ENCODE measurements at regions of chr18 and their contacts with region 1.

Region 1: DNA sequence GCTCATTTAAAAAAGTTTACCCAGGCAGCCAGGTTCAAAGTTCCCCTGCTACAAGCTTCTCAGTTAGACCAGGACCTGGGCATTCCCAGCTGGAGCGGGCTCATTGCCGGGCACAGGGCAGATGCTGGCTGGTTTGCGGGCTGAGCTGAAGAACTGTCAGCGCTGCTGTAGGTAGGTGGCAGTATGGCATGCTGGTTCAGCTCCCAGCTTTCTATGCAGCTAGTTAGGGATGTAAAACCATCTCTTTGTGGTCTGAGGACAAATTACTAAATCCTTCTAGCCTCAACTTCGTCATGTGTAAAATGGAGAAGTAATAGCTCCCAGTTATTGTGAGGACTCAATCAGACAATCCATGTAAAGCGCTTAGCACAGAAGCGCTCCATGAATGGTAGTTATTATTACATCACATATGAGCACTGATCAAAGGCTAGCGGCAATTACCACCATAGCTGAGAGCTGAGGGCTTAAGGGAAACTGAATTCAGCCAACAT is 2.4 kb upstream of the LDLRAD4 start:
- DNase-seq: peak; percentile 72
- H3K4me3 ChIP-seq: peak overlapping the region; percentile 74
- H3K27ac ChIP-seq: peak overlapping the region; percentile 92
- H3K4me1 ChIP-seq: peaks cover 47% of the 10 kb centered on the region
- H3K27me3 ChIP-seq: no peaks in the 10 kb centered on the region
- CTCF ChIP-seq: peak; percentile 84

Region 2: GRCh38 chr18:13095466-13095865 is 120.7 kb before region 1 on chr18:
- intact Hi-C with region 1: no loop called
- DNase-seq: no peak
- H3K4me3 ChIP-seq: no peak overlapping the region
- H3K27ac ChIP-seq: no peak overlapping the region
- H3K4me1 ChIP-seq: peaks cover 5% of the 10 kb centered on the region
- H3K27me3 ChIP-seq: no peaks in the 10 kb centered on the region
- CTCF ChIP-seq: no peak

Region 3: GRCh38 chr18:13319629-13320028 is 103.5 kb after region 1 on chr18:
- intact Hi-C with region 1: loop called (anchors 10 kb)
- DNase-seq: no peak
- H3K4me3 ChIP-seq: no peak overlapping the region
- H3K27ac ChIP-seq: peak overlapping the region; percentile 35
- H3K4me1 ChIP-seq: peaks cover 24% of the 10 kb centered on the region
- H3K27me3 ChIP-seq: no peaks in the 10 kb centered on the region
- CTCF ChIP-seq: no peak

Region 4: GRCh38 chr18:13530879-13531387 is 314.8 kb after region 1 on chr18:
- intact Hi-C with region 1: loop called (anchors 10 kb)
- DNase-seq: peak; percentile 62
- H3K4me3 ChIP-seq: no peak overlapping the region
- H3K27ac ChIP-seq: peak overlapping the region; percentile 31
- H3K4me1 ChIP-seq: peaks cover 18% of the 10 kb centered on the region
- H3K27me3 ChIP-seq: no peaks in the 10 kb centered on the region
- CTCF ChIP-seq: peak; percentile 70

Region 5: DNA sequence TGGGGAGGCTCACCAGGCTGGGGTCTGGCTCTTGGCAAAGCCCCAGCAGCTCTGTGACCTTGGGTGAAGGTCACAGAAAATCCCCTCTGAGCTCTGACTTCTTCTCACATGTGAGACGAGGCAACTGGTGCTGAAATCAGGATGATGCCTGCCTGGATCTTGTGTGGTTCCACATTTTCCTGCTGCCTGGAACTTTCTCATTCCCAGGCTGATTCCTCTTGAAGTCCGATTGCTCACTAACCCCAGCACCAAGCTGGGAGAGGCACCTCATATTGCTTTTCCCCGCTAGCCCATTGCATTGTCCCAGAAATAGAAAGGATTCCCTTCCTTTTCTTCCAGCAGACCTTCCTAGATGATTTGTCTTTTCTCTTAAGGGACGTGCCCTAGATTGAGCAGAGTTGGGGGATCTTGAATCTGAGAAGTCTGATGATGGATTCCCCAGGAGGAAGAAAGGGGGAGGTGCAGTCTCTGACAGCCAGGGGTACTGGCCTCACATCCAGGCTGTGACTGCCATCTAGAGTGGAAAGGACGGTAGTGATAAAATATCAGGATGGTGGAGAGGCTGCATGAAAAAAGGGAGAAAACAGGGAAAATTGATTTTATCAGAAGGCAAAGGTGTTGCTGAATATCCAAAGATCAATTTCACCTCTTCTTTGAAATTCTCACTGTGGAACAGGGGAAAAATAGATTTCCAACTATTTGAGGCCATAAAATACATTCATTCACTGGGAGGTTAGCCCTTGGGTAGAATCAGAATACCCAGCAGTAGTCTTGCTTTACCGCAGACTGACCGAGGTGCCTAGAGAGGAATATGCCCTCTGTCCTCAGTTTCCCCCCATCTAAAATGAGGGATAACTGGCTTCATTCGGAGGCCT is 413.9 kb after region 1 on chr18:
- intact Hi-C with region 1: loop called (anchors 5 kb)
- DNase-seq: no peak
- H3K4me3 ChIP-seq: no peak overlapping the region
- H3K27ac ChIP-seq: peak overlapping the region; percentile 66
- H3K4me1 ChIP-seq: peaks cover 29% of the 10 kb centered on the region
- H3K27me3 ChIP-seq: no peaks in the 10 kb centered on the region
- CTCF ChIP-seq: peak; percentile 87

Region 6: DNA sequence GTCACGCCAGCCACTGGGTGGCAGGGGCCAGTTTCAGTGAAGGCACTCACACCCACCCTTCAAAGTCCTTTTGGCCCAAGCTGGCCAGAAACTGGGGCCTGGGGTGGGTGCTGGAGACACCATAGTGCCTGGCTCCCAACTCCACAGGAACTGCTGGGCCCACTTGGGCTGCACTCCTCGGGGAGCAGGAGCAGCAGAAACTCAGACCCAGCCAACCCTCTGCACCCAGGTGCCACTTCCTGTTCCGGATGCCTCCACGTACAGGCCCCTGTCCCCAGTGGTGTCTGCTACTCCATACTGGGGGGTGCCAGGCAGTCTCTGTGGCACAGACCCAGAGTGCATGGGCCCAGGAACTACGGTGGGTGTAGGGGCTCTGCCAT is 958.6 kb after region 1 on chr18:
- intact Hi-C with region 1: no loop called
- DNase-seq: no peak
- H3K4me3 ChIP-seq: no peak overlapping the region
- H3K27ac ChIP-seq: no peak overlapping the region
- H3K4me1 ChIP-seq: no peaks in the 10 kb centered on the region
- H3K27me3 ChIP-seq: peaks cover 6% of the 10 kb centered on the region
- CTCF ChIP-seq: no peak

Measured in left ventricle myocardium inferior (tissue), 1 donor.